ENCODE measurements at regions of chr3 and their contacts with region 1.

Region 1: GRCh38 chr3:49839193-49839809 is 17.1 kb downstream of the TRAIP start:
- DNase-seq: peak; percentile 86
- ATAC-seq: peak; percentile 90

Region 2: DNA sequence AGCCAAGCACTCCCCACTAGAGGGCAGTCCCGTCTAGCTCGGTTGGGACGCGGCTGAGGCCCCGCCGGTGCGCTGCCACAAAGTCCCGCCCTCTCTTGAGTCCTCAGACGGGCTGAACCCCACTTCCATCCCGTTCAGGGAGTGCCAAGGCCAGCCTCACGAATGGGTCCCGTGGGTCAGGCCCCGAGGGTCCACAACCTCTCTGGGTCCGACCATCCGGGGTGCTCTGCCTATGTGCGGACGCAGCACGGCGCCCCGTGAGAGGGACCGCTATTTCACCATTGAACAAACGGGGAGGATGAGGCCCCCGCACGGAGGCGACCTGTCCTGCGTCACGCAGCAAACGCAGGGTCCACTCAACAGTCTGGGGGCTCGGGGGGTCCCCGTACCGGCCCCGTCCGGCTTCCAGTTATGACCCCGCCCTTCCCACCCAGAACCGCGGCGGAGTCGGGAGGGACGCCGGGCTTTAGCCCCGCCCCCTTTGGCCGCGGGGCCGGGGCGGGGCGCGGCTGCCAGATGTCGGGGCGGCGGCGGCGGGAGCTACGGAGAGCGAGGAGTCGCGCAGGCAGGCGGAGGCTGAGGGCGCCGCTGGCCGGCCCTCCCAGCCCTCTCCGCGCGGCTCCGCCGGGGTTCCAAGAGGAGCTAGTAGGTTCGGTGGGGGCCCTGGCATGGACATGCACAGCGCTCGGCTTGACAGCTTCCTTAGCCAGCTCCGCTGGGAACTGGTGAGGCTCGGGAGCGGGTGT is 36.4 kb before region 1 on chr3 and contains the start of gene INKA1:
- intact Hi-C with region 1: loop called (anchors 1 kb)
- DNase-seq: peak; percentile 95
- ATAC-seq: peak; percentile 89
- total RNA-seq, gene INKA1: 2.9 TPM